Head of caudate nucleus (tissue), 42 donors: ENCODE measurements at regions of chr2 and their contacts with region 1.

Region 1: DNA sequence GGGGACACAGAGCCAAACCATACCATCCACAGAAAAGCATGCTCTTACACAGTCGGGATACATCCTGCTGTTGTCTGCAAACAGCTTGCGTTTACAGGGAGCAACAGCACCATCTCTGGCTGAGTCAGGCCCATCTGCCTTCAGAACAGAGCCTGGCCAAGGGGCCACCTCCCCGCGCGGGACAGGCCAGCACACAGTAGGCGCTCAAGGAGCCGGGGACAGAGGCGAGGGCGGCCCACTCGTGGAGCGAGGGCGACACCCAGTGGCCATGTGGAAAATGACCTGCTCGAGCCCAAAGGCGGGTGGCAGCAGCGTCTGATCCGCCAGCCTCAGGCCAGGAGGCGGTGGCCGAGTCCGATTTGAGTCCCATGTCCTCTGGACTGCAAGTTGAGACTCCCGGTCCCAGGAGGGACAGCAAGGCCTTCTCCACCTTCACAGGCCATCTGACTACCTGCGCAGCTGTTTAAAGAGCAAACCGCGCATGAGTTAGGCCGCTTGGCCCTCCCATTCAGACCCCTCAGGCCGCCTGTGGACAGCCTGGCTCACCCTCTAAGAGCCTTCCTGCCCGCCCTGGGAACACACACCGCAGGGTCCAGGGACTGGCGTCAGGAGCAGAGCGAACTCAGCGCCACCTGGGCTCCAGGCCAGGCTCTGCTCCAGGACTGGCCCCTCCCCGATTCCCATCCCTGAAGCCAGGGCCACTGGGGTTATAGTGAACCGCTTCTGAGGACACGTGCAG is 38.3 kb downstream of the TTC32 start:
- DNase-seq: peak; percentile 27 to 92 (median 80)

Region 2: DNA sequence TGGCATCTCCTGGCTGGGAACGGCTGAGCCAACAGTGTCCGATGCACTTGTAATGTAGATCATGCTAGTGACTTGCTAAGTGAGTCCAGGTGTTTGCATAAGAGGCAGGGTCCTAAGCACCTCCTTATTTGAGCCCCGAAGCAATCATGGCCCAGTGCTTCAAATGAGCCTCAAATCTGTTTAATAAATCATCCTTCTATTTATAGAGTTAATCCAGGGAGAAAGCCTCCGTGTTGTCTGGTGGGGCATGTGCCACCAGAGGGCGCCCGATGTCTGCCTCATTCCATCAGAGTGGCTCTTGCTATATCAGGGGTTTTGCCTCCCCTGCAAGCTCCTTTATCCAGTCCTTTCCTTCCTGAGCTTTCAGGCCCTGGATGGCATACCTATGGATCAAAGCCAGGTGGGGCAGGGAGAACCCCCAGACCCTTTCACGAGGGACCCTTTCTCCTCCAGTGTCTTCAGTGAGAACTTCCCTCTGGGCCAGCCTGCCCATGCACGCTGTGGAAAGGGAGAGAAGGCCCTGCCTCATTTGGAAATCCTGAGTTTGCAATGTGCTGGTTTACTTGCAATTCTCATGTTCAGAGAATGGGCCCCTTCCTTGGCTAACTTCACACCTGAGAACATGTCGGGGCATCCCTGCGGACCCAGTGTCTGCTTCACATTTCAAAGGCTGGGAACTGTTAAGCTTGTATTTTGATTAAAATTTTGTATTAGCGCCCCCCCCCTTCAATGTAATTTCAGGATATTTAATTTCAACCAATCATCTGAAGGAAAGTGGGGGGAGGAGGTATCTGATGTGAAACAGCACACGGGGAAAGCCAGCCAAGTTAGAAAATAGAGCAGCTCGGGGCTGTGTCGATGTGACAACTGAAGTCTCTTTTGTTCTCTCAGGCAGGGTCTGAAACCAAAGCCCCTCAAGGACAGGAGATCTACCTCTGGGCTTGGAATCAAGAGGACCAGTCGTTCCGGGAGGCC is 1342.7 kb before region 1 on chr2:
- intact Hi-C with region 1: loop called (anchors 10 kb)
- DNase-seq: peak; percentile 64 to 93 (median 86)